Endothelial cell of umbilical vein (primary cell): ENCODE measurements at regions of chr15 and their contacts with region 1.

Region 1: DNA sequence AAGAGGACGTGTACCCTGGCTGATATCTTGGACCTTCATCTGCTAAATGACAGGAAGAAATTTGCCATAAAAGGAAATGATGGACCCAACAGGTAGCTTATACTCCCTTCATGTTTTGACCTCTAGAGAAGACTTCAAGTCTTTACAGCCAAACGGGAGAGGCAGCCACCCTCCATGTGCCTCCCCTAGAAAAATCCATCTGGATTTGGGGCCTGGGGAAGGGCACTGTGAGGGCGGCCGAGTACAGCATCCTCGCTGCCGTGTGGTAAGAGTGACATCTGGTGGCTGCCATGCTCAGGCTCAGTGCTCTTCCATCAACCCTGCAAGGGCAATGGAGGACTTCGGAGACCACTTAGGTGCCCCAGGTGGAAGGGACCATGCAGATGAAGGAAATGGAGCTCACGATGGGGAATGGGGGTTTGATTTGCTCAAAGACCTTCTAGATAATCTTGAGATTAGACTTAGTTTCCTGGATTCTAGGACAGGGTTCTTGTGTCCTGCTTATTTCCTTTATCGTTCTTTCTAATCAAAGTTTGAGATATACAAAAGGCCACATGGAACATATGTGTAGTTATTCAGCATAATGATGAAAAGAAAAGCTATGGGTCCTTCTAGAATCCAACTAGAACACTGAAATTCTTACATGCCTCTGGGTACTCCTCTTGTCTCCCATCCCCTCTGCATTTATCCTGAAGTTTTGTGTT is 44.4 kb downstream of the AQP9 start:
- DNase-seq: peak; percentile 76
- H3K4me3 ChIP-seq: no peak overlapping the region
- H3K27ac ChIP-seq: no peak overlapping the region
- H3K4me1 ChIP-seq: peaks cover 20% of the 10 kb centered on the region
- H3K27me3 ChIP-seq: no peaks in the 10 kb centered on the region
- CTCF ChIP-seq: peak; percentile 83 to 93
- POLR2A ChIP-seq: no peak

Region 2: DNA sequence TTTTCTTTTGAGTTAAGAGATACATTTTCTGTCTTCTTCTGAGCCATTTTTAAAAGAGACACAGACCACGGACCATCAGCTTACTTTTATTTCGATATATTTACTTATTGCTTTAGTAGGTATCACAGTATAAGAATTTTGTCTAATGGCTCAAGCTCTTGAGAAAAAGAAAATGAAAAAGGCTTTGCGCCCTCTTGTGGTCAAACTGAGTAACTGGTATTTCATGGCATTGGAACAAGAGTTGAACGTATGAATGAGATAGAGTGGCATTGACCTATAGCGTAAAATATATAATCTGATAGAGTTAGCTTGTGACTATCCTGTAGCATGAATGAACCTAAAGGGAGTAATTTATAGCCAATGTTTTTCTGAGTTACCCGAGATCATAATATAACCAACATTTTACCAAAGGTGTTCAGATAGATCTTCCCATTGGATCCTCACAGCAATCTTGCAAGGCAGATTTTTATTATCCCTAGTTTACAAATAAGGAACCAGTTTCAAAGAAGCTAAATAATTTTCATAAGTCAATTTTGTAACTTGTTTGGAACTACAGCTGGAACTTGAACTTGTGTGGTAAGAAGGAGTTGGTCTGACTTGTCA is 321.5 kb before region 1 on chr15:
- CTCF ChIA-PET with region 1: interaction called, 14 read pairs
- POLR2A ChIA-PET with region 1: no interaction called
- dilution Hi-C with region 1: no loop called
- intact Hi-C with region 1: loop called (anchors 1 kb)
- DNase-seq: peak; percentile 84
- H3K4me3 ChIP-seq: no peak overlapping the region
- H3K27ac ChIP-seq: peak overlapping the region; percentile 45
- H3K4me1 ChIP-seq: peaks cover 10% of the 10 kb centered on the region
- H3K27me3 ChIP-seq: peaks cover 0 to 2% of the 10 kb centered on the region in 2 experiments
- CTCF ChIP-seq: peak; percentile 58
- POLR2A ChIP-seq: no peak

Region 3: DNA sequence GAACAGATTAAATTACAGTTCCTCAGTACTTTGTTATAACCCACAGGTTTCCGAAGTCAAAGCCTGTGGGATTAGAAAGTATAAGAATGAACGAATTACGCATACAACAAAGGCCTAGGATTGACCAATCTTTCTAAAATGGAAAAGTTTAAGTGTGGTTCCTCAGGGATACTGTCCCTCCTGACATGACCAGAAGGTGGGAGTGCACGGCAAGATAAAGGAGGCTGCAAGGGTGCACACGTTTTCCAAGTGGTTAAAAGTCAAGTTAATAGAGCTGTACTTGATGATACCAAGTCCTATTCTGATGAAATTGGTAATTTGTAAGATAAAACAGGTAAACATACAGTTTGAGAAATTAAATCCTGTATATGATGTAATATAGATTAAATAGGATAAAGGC is 213.3 kb before region 1 on chr15:
- CTCF ChIA-PET with region 1: interaction called, 13 read pairs
- POLR2A ChIA-PET with region 1: no interaction called
- dilution Hi-C with region 1: no loop called
- intact Hi-C with region 1: loop called (anchors 1 kb)
- DNase-seq: peak; percentile 46
- H3K4me3 ChIP-seq: no peak overlapping the region
- H3K27ac ChIP-seq: no peak overlapping the region
- H3K4me1 ChIP-seq: no peaks in the 10 kb centered on the region
- H3K27me3 ChIP-seq: no peaks in the 10 kb centered on the region
- CTCF ChIP-seq: peak in 1 of 2 donors; percentile 19
- POLR2A ChIP-seq: no peak

Region 4: GRCh38 chr15:58115692-58116091 is 66.9 kb before region 1 on chr15:
- CTCF ChIA-PET with region 1: interaction called, 4 read pairs
- POLR2A ChIA-PET with region 1: no interaction called
- dilution Hi-C with region 1: no loop called
- intact Hi-C with region 1: loop called (anchors 1 kb)
- DNase-seq: peak; percentile 37
- H3K4me3 ChIP-seq: no peak overlapping the region
- H3K27ac ChIP-seq: no peak overlapping the region
- H3K4me1 ChIP-seq: no peaks in the 10 kb centered on the region
- H3K27me3 ChIP-seq: peaks cover 0 to 3% of the 10 kb centered on the region in 2 experiments
- CTCF ChIP-seq: peak; percentile 5 to 29
- POLR2A ChIP-seq: no peak

Region 5: DNA sequence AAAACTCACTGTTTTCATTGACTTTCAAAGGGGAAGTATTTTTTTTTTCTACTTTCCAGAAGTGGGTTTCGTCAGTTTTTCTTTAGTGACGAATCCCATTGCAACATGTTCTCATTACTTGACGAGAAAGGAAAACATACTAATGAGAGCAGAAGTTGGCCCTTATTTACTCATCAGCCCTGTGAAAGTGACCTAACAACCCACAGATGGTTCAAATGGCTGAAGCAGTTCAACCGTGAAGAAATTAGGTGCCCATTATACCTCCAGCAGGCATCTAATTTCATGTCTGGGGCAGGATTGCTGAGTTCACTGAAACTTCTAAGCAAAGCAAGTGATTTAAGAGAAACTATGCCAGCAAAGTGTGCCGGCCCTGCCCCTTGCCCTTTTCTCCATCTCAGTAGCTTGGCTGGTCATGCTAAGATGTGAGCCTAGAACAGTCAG is 35.4 kb before region 1 on chr15:
- CTCF ChIA-PET with region 1: no interaction called
- POLR2A ChIA-PET with region 1: no interaction called
- dilution Hi-C with region 1: no loop called
- intact Hi-C with region 1: no loop called
- DNase-seq: no peak
- H3K4me3 ChIP-seq: no peak overlapping the region
- H3K27ac ChIP-seq: no peak overlapping the region
- H3K4me1 ChIP-seq: no peaks in the 10 kb centered on the region
- H3K27me3 ChIP-seq: peaks cover 0 to 8% of the 10 kb centered on the region in 2 experiments
- CTCF ChIP-seq: no peak
- POLR2A ChIP-seq: no peak

Region 6: GRCh38 chr15:58212909-58213526 is 30.4 kb after region 1 on chr15:
- CTCF ChIA-PET with region 1: interaction called, 11 read pairs
- POLR2A ChIA-PET with region 1: no interaction called
- dilution Hi-C with region 1: no loop called
- intact Hi-C with region 1: no loop called
- DNase-seq: peak; percentile 56
- H3K4me3 ChIP-seq: no peak overlapping the region
- H3K27ac ChIP-seq: no peak overlapping the region
- H3K4me1 ChIP-seq: peaks cover 5% of the 10 kb centered on the region
- H3K27me3 ChIP-seq: no peaks in the 10 kb centered on the region
- CTCF ChIP-seq: peak; percentile 35 to 59
- POLR2A ChIP-seq: no peak